Activated naive CD4-positive, alpha-beta T cell treated with anti-CD3 and anti-CD28 coated beads for 36 hours (primary cell): ENCODE measurements at regions of chr11 and their contacts with region 1.

Region 1: GRCh38 chr11:1389103-1389931 is 417 bp upstream of the BRSK2 start:
- DNase-seq: peak; percentile 97
- H3K4me3 Mint-ChIP-seq: peak overlapping the region; percentile 56
- H3K27ac Mint-ChIP-seq: no peak overlapping the region
- H3K4me1 Mint-ChIP-seq: peaks cover 3% of the 10 kb centered on the region
- H3K27me3 Mint-ChIP-seq: peaks cover 21% of the 10 kb centered on the region

Region 2: DNA sequence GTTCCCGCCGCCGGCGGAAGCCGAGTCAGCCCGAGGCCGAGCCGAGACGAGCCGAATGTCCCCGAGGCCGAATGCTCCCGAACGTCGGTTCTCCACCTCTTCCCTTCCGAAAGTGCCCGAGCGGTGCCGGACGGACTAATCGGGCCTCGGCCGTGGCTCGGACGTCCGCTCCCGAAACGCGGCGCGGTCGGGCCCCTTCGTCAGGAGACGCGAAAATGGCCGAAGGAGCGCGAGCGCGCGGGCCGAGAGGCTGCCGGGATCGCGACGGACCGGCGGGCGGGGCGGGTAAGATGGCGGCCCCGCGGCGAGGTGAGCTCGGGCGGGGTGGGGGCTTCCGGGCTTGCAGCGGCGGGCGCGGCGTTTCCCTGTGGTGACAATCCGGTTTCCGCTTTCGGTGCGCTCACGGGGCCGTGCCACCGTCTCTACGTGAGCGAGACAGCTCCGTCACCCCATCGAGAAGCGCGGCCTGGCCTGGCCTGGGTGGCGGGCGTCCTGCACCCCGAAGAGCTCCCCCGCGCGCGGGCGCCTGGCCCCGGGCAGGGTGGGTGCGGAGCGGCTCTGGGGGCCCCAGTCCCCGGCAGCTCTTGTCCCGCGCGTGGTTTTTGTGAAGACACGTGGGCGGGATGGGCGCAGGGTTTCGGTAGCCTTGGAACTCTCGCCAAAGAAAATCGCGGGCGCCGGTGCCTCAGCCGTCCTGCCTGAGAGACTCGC is 693.6 kb before region 1 on chr11 and contains the start of gene TMEM80:
- CTCF ChIA-PET with region 1: no interaction called
- intact Hi-C with region 1: loop called (anchors 10 kb)
- DNase-seq: peak; percentile 99
- H3K4me3 Mint-ChIP-seq: peak within 1 kb of the TSS; percentile 83
- H3K27ac Mint-ChIP-seq: peak within 1 kb of the TSS; percentile 93
- H3K4me1 Mint-ChIP-seq: peaks cover 54% of the 10 kb centered on the region
- H3K27me3 Mint-ChIP-seq: no peaks in the 10 kb centered on the region
- total RNA-seq, gene TMEM80: 5.6 to 6.0 TPM

Region 3: DNA sequence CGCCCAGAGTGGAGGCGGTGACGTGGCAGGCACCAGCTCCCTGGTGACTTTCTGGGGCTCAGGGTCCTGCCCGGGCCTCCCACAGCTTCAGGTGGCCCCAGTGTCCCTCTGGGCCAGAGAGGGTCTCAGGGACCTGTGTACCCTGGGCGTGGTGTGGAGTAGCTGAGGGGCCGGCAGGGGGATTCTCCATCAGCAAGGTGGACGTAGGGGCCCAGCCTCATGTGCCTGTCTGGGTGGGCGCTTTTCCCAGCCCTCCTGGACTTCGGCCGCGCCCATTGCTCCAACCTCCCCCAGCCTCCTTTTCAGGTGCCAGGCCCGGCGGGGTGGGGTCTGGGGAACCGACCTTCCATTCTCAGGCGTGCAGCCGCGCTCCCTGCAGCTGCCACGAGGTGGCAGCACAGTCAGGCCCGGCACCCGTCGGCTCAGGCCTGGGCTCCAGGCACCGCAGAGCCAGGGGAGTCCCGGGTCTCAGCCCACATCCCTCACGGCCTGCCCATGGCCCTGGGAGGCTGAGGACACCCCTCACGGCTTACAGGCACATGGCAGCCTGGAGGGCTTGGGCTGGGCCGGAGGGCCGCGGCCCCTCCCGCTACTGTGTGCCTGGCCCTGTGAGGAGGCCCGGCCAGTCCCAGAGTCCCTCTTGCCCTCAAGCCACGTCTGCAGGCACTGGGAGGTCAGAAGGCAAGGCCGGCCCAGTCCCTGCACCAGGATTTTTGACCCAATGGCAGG is 186.4 kb before region 1 on chr11:
- CTCF ChIA-PET with region 1: no interaction called
- intact Hi-C with region 1: loop called (anchors 2 kb)
- DNase-seq: peak; percentile 68
- H3K4me3 Mint-ChIP-seq: no peak overlapping the region
- H3K27ac Mint-ChIP-seq: no peak overlapping the region
- H3K4me1 Mint-ChIP-seq: no peaks in the 10 kb centered on the region
- H3K27me3 Mint-ChIP-seq: no peaks in the 10 kb centered on the region

Region 4: DNA sequence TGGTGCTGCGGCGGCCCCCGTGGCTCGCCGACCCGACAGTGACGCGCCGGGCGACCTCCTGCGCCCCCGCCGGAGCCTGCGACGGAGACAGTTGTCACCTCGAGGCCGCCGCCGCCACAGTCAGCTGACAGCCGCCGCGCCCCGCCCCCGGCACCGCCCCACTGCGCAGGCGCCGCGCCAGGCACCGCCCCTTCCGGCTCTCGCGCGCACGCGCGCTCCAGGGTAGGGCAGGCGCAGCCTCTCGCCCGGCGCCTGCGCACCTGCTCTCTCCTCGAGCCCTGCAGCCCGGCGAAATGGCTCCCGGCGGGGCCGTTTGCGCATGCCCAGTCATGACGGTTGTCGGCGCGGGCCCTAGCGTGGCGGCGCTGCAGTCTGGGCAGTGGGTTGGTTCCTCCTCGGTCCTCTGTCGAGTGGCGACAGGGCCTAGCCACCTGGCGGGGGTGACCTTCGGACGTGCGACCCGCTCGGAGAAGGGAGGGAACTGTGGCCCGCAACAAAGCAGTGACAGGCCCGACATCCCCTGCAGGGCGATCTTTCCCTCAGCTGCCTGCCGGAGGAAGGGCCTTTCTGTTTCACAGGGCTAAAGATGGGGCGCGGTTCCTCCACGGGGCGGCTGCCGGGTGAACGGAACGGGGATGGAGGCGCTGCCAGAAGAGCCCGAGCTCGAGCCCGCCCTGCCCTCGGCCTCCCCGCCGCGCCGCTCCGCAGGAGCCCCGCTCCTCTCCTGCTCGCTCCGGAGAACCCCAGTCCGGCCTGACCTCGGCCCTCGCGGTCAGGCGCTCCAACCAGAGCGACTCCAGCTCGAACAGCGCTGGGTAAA is 79.6 kb before region 1 on chr11 and contains the start of gene TOLLIP:
- CTCF ChIA-PET with region 1: interaction called, 3 read pairs
- intact Hi-C with region 1: loop called (anchors 1 kb)
- DNase-seq: peak; percentile 97
- H3K4me3 Mint-ChIP-seq: peak within 1 kb of the TSS; percentile 89
- H3K27ac Mint-ChIP-seq: peak within 1 kb of the TSS; percentile 94
- H3K4me1 Mint-ChIP-seq: peaks cover 40% of the 10 kb centered on the region
- H3K27me3 Mint-ChIP-seq: no peaks in the 10 kb centered on the region
- total RNA-seq, gene TOLLIP: 19.9 to 21.7 TPM

Region 5: GRCh38 chr11:1335811-1336761 is 53.2 kb before region 1 on chr11:
- CTCF ChIA-PET with region 1: interaction called, 3 read pairs
- intact Hi-C with region 1: loop called (anchors 2 kb)
- DNase-seq: peak; percentile 70
- H3K4me3 Mint-ChIP-seq: peak overlapping the region; percentile 76
- H3K27ac Mint-ChIP-seq: peak overlapping the region; percentile 56
- H3K4me1 Mint-ChIP-seq: peaks cover 10% of the 10 kb centered on the region
- H3K27me3 Mint-ChIP-seq: peaks cover 3% of the 10 kb centered on the region